GM12878 (cell line): ENCODE measurements at regions of chr17 and their contacts with region 1.

Region 1: DNA sequence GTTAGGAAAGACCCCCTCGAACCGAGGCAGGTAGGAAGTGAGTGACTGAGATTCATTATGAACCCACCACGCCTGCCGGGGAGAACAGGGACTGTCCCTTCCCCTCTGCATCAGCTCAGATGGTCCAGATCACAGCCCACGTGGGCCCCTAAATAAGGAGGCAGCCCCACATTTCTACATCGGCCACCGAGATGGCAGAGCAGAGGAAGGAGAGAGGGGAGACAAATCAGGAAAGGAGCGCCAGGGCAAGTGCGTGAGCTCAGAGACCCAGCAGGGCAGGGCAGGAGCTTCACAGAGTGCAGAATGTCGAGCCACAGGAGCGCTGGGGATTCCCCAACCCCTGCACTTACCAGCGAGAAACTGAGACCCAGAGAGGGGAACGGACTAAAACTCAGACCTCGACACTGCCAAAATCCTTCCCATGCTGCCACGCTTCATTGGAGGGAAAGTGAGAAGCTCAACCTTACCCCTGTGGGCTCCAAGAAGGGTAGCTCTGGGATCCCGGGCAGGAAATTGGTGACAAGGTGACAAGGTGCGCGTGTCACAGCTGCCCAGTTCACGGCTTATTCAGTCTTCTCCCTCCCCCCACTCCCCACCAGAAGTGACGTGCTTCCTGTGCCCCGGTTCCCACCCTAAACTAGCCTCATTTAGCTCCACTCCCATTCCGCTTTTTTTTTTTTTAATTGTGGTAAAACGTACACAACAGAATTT is at the start of gene ICAM2:
- DNase-seq: peak; percentile 90
- ATAC-seq: peak; percentile 79
- H3K4me3 ChIP-seq: peak within 1 kb of the TSS; percentile 74
- H3K27ac ChIP-seq: peak within 1 kb of the TSS; percentile 98
- H3K4me1 ChIP-seq: peaks cover 16% of the 10 kb centered on the region
- H3K27me3 ChIP-seq: no peaks in the 10 kb centered on the region
- CTCF ChIP-seq: peak in 1 of 3 experiments; percentile 15; a peak in 1 of 6 replicates
- EP300 ChIP-seq: peak in 1 of 2 experiments; percentile 73; a peak in 2 of 4 replicates
- POLR2A ChIP-seq: peak; percentile 76
- RAD21 ChIP-seq: no peak
- polyA plus RNA-seq, gene ICAM2: 23.6 to 27.7 TPM

Region 2: GRCh38 chr17:63694229-63694949 is 325.8 kb before region 1 on chr17:
- CTCF ChIA-PET with region 1: no interaction called
- POLR2A ChIA-PET with region 1: no interaction called
- RAD21 ChIA-PET with region 1: no interaction called
- SMC1A ChIA-PET with region 1: no interaction called
- in situ Hi-C with region 1: no loop called
- intact Hi-C with region 1: no loop called
- DNase-seq: no peak
- ATAC-seq: no peak
- H3K4me3 ChIP-seq: no peak overlapping the region
- H3K27ac ChIP-seq: peak overlapping the region; percentile 8; the same call in 1 of the 2 replicates
- H3K4me1 ChIP-seq: peaks cover 27% of the 10 kb centered on the region
- H3K27me3 ChIP-seq: no peaks in the 10 kb centered on the region
- CTCF ChIP-seq: no peak
- EP300 ChIP-seq: no peak
- POLR2A ChIP-seq: peak; percentile 73
- RAD21 ChIP-seq: no peak

Region 3: DNA sequence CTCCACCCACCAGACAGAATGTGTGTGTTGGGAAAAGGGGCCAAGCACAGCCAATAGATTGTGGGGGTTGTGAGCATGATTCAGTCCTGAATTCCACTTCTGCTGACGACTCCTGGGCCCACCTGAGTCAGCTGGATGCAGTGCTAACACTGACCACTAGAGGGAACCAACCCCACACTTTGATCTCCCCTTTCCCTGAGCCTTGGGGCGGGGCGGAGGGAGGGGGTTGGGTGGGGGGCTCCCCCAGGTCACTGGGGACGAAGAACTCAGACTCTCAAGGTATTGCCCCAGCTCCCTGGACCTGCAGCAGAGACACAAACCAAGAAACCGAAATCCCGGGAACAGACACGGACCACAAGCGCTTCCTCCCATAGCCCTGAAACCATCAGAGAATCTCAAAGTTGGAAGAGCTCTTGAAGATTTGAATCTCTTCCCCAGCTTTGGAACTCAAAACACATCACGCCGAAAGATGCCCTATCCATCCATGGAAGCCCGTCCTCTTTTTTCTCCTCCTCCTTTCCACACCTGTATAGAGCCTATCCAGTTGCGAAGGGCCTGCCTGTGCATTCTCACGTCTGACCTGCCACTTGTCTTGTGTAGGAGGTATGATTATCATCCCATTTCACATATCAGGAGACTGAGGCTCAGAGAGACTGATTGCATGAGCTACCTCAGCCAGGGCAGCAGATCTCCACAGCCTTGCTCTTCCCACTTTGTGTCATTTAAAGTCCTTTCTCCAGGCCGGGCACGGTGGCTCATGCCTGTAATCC is 108.4 kb before region 1 on chr17:
- CTCF ChIA-PET with region 1: interaction called, 351 read pairs
- POLR2A ChIA-PET with region 1: interaction called, 4 read pairs
- RAD21 ChIA-PET with region 1: interaction called, 12 read pairs
- SMC1A ChIA-PET with region 1: interaction called, 88 read pairs
- in situ Hi-C with region 1: no loop called
- intact Hi-C with region 1: no loop called
- DNase-seq: no peak
- ATAC-seq: peak; percentile 78
- H3K4me3 ChIP-seq: no peak overlapping the region
- H3K27ac ChIP-seq: no peak overlapping the region
- H3K4me1 ChIP-seq: peaks cover 5% of the 10 kb centered on the region
- H3K27me3 ChIP-seq: peaks cover 0 to 2% of the 10 kb centered on the region in 2 experiments; a peak in 2 of 4 replicates
- CTCF ChIP-seq: peak; percentile 58 to 79 (median 66)
- EP300 ChIP-seq: no peak
- POLR2A ChIP-seq: no peak
- RAD21 ChIP-seq: peak; percentile 68

Region 4: DNA sequence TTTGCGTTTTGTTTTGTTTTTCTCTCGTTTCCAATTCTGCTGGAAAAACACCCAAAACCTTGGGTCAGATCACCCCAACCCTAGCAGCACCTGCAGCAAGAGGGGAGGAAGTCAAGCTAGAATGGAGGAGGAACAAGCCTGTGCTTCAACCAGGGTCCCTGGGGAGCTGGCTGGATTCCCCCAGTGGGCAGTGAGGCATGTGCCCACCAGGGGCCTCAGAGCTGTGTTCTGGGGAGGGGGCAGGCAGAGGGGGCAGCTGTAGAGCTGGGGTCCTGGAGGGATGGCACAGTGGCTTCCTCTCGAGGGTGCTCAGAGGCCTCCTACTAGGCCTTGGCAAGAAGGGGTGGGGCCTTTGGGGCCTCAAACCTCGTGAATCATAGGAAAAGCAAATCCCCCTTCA is 94.6 kb before region 1 on chr17:
- CTCF ChIA-PET with region 1: interaction called, 351 read pairs
- POLR2A ChIA-PET with region 1: interaction called, 33 read pairs
- RAD21 ChIA-PET with region 1: interaction called, 54 read pairs
- SMC1A ChIA-PET with region 1: interaction called, 88 read pairs
- in situ Hi-C with region 1: loop called (anchors 5 kb)
- intact Hi-C with region 1: no loop called
- DNase-seq: no peak
- ATAC-seq: peak; percentile 29
- H3K4me3 ChIP-seq: no peak overlapping the region
- H3K27ac ChIP-seq: no peak overlapping the region; the same call in 1 of the 2 replicates
- H3K4me1 ChIP-seq: peaks cover 47% of the 10 kb centered on the region
- H3K27me3 ChIP-seq: no peaks in the 10 kb centered on the region
- CTCF ChIP-seq: no peak
- EP300 ChIP-seq: no peak
- POLR2A ChIP-seq: no peak
- RAD21 ChIP-seq: no peak

Region 5: GRCh38 chr17:63946440-63947367 is 73.5 kb before region 1 on chr17:
- CTCF ChIA-PET with region 1: interaction called, 95 read pairs
- POLR2A ChIA-PET with region 1: interaction called, 9 read pairs
- RAD21 ChIA-PET with region 1: interaction called, 30 read pairs
- SMC1A ChIA-PET with region 1: interaction called, 21 read pairs
- in situ Hi-C with region 1: no loop called
- intact Hi-C with region 1: loop called (anchors 5 kb)
- DNase-seq: no peak
- ATAC-seq: peak; percentile 92
- H3K4me3 ChIP-seq: peak overlapping the region; percentile 39; the same call in 1 of the 2 replicates
- H3K27ac ChIP-seq: peak overlapping the region; percentile 86
- H3K4me1 ChIP-seq: peaks cover 18% of the 10 kb centered on the region
- H3K27me3 ChIP-seq: no peaks in the 10 kb centered on the region
- CTCF ChIP-seq: peak; percentile 65 to 85 (median 78)
- EP300 ChIP-seq: no peak
- POLR2A ChIP-seq: 0 out of 2 replicates have a peak, but pooled peaks have one; percentile 49
- RAD21 ChIP-seq: peak; percentile 65

Region 6: GRCh38 chr17:63993368-63993985 is 26.7 kb before region 1 on chr17:
- CTCF ChIA-PET with region 1: interaction called, 14 read pairs
- POLR2A ChIA-PET with region 1: no interaction called
- RAD21 ChIA-PET with region 1: interaction called, 6 read pairs
- SMC1A ChIA-PET with region 1: interaction called, 11 read pairs
- in situ Hi-C with region 1: no loop called
- intact Hi-C with region 1: no loop called
- DNase-seq: no peak
- ATAC-seq: no peak
- H3K4me3 ChIP-seq: no peak overlapping the region
- H3K27ac ChIP-seq: no peak overlapping the region
- H3K4me1 ChIP-seq: peaks cover 4% of the 10 kb centered on the region
- H3K27me3 ChIP-seq: peaks cover 3 to 7% of the 10 kb centered on the region in 2 experiments
- CTCF ChIP-seq: no peak
- EP300 ChIP-seq: no peak
- POLR2A ChIP-seq: no peak
- RAD21 ChIP-seq: no peak

Region 7: GRCh38 chr17:64091116-64091515 is 70.9 kb after region 1 on chr17:
- CTCF ChIA-PET with region 1: no interaction called
- POLR2A ChIA-PET with region 1: no interaction called
- RAD21 ChIA-PET with region 1: no interaction called
- SMC1A ChIA-PET with region 1: no interaction called
- in situ Hi-C with region 1: no loop called
- intact Hi-C with region 1: no loop called
- DNase-seq: peak; percentile 57
- ATAC-seq: peak; percentile 90
- H3K4me3 ChIP-seq: peak overlapping the region; percentile 9; the same call in 1 of the 2 replicates
- H3K27ac ChIP-seq: peak overlapping the region; percentile 54
- H3K4me1 ChIP-seq: peaks cover 42% of the 10 kb centered on the region
- H3K27me3 ChIP-seq: no peaks in the 10 kb centered on the region
- CTCF ChIP-seq: no peak
- EP300 ChIP-seq: no peak
- POLR2A ChIP-seq: 0 out of 2 replicates have a peak, but pooled peaks have one; percentile 11
- RAD21 ChIP-seq: no peak

Region 8: GRCh38 chr17:64117981-64118979 is 98.1 kb after region 1 on chr17:
- CTCF ChIA-PET with region 1: interaction called, 81 read pairs
- POLR2A ChIA-PET with region 1: interaction called, 10 read pairs
- RAD21 ChIA-PET with region 1: interaction called, 9 read pairs
- SMC1A ChIA-PET with region 1: interaction called, 10 read pairs
- in situ Hi-C with region 1: no loop called
- intact Hi-C with region 1: no loop called
- DNase-seq: no peak
- ATAC-seq: no peak
- H3K4me3 ChIP-seq: no peak overlapping the region
- H3K27ac ChIP-seq: no peak overlapping the region
- H3K4me1 ChIP-seq: peaks cover 30% of the 10 kb centered on the region
- H3K27me3 ChIP-seq: no peaks in the 10 kb centered on the region
- CTCF ChIP-seq: no peak
- EP300 ChIP-seq: no peak
- POLR2A ChIP-seq: no peak
- RAD21 ChIP-seq: no peak